Dendritic cell treated with granulocyte-macrophage colony-stimulating factor and Interleukin-4, amounts not matched to agents 40 ng/mL and 50 ng/mL, for 4 days (primary cell): ENCODE measurements at regions of chr9 and their contacts with region 1.

Region 1: DNA sequence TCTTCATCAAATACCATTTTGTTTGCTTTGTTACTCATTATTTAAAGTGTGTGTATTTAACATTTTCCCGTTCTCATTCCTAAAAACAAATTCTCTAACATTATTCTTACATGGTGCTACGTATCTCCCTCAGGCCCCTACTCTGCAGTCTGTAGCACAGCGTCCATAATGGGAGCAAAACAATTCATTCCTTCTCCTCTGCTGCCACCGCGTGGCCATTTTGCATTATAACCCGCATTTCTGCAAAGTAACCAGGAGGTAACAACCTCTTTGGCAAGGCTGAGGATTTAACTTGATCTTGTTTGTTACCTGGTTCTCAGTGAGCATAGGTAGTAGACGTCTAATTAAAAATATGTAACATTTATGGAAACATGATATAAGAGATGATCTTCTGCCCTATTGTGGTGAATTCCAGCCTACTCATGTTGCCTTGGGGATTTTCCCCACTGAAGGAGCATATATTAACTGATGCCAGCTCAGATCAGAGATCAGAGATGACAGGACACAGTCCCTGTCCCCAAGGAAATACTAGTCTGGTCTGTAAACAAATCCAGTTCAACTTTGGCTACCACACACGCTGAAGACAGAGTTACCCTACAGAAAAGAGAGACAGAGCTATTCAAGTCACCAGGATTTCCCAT is 10.5 kb downstream of the OR1K1 start:
- H3K4me3 Mint-ChIP-seq: no peak overlapping the region
- H3K27ac Mint-ChIP-seq: no peak overlapping the region
- H3K4me1 Mint-ChIP-seq: peaks cover 11% of the 10 kb centered on the region
- H3K27me3 Mint-ChIP-seq: no peaks in the 10 kb centered on the region

Region 2: GRCh38 chr9:122099271-122099869 is 711.1 kb before region 1 on chr9:
- intact Hi-C with region 1: loop called (anchors 5 kb)
- H3K4me3 Mint-ChIP-seq: peak overlapping the region; percentile 37
- H3K27ac Mint-ChIP-seq: no peak overlapping the region
- H3K4me1 Mint-ChIP-seq: peaks cover 13% of the 10 kb centered on the region
- H3K27me3 Mint-ChIP-seq: peaks cover 20% of the 10 kb centered on the region

Region 3: DNA sequence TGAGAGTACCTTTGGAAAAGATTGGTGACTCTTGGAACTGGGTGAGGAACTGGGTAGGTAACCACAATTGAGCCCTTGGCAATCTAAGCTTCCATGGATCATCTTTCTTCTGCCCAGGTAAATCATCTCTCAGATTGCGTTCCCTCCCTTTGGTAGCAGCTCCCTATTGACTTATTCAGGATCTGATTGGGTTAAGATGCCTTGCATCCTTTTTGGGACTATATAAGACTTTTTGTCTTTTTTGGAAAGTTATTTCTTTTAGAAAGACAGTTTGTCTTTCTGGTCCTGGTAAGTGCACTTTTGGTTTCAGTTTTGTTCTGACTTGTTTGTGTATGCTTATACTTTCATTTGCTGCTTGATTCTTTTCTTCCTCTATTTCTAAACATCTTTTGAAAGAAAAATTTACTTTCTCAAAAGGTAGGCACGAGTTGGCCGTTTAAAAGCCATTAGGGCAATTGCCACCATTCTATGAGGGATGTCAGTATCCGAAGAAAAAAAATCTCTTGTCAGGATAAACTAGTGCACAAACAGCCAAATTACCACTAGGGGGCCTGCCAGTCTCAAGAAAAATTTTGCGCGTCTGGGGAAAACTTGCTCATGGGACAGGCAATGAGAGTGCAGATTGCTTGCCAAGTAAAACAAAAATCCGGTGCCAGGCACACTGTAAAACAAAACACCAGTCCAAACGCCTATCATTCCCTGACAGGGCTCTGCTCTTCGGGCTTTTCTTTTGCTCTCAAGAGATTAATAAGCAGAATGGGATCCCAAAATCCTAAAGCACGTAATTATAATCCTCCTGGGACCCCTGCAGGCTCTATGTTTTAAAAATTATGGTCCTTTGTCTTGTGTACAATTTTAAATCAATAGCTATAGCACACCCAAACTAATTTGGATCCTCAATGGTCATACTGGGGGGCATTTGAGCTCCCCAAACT is 345.5 kb before region 1 on chr9:
- intact Hi-C with region 1: loop called (anchors 1 kb)
- H3K4me3 Mint-ChIP-seq: peak overlapping the region; percentile 69
- H3K27ac Mint-ChIP-seq: peak overlapping the region; percentile 35
- H3K4me1 Mint-ChIP-seq: peaks cover 5% of the 10 kb centered on the region
- H3K27me3 Mint-ChIP-seq: peaks cover 34% of the 10 kb centered on the region

Region 4: DNA sequence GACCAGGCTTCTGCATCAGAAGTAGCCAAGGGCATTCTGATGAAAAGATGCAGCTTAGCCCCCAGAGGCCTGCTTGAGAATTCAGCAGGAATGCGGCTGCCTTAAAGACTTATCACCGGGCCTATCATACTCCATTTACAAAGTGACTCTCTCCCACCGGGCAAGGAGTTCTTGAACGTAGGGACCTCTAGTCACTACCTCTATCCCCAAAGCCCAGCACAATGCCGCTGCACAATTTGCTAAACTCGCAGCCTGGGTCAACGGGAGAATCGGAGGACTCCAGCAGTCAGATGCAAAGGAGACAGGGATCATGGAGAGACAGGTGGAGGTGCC is 17.3 kb after region 1 on chr9:
- intact Hi-C with region 1: no loop called
- H3K4me3 Mint-ChIP-seq: peak overlapping the region; percentile 95
- H3K27ac Mint-ChIP-seq: peak overlapping the region; percentile 98
- H3K4me1 Mint-ChIP-seq: peaks cover 22% of the 10 kb centered on the region
- H3K27me3 Mint-ChIP-seq: no peaks in the 10 kb centered on the region

Region 5: GRCh38 chr9:122954253-122954691 is 143.8 kb after region 1 on chr9:
- intact Hi-C with region 1: no loop called
- H3K4me3 Mint-ChIP-seq: no peak overlapping the region
- H3K27ac Mint-ChIP-seq: peak overlapping the region; percentile 65
- H3K4me1 Mint-ChIP-seq: peaks cover 48% of the 10 kb centered on the region
- H3K27me3 Mint-ChIP-seq: no peaks in the 10 kb centered on the region